ENCODE measurements at regions of chr2 and their contacts with region 1.

Region 1: GRCh38 chr2:61144697-61145268 is 17.2 kb upstream of the C2orf74 start:
- DNase-seq: peak; percentile 97
- ATAC-seq: peak; percentile 90
- H3K4me3 ChIP-seq: peak overlapping the region; percentile 78 to 95 (median 88)
- H3K4me3 Mint-ChIP-seq: peak overlapping the region; percentile 95
- H3K27ac ChIP-seq: peak overlapping the region; percentile 76 to 78
- H3K27ac Mint-ChIP-seq: peak overlapping the region; percentile 98
- H3K4me1 ChIP-seq: peaks cover 8 to 11% of the 10 kb centered on the region in 2 donors
- H3K4me1 Mint-ChIP-seq: peaks cover 13% of the 10 kb centered on the region
- H3K27me3 ChIP-seq: no peaks in the 10 kb centered on the region
- H3K27me3 Mint-ChIP-seq: no peaks in the 10 kb centered on the region
- CTCF ChIP-seq: no peak

Region 2: DNA sequence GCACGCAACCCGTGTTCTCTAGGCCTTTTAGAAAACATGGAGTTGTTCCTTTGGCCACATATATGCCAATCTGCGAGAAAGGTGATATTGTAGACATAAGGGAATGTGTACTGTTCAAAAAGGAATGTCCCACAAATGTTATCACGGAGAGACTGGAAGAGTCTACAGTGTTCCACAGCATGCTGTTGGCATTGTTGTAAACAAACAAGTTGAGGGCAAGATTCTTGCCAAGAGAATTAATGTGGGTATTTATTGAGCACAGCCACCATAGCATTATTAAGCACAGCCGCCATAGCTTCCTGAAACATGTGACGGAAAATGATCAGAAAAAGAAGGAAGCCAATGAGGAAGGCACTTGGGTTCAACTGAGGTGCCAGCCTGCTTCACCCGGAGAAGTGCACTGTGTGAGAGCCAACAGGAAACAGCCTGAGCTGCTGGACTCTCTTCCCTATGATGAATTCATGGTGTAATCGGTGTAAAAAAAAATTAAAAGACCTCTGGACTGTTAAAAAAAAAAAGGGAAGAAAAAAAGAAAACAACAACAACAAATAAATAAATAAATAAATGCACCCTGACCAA is 292.4 kb before region 1 on chr2:
- CTCF ChIA-PET with region 1: no interaction called
- POLR2A ChIA-PET with region 1: no interaction called
- intact Hi-C with region 1: no loop called
- DNase-seq: no peak
- ATAC-seq: no peak
- H3K4me3 ChIP-seq: no peak overlapping the region
- H3K4me3 Mint-ChIP-seq: no peak overlapping the region
- H3K27ac ChIP-seq: no peak overlapping the region
- H3K27ac Mint-ChIP-seq: no peak overlapping the region
- H3K4me1 ChIP-seq: peaks cover 15 to 16% of the 10 kb centered on the region in 2 donors
- H3K4me1 Mint-ChIP-seq: peaks cover 18% of the 10 kb centered on the region
- H3K27me3 ChIP-seq: no peaks in the 10 kb centered on the region
- H3K27me3 Mint-ChIP-seq: no peaks in the 10 kb centered on the region
- CTCF ChIP-seq: no peak

Region 3: DNA sequence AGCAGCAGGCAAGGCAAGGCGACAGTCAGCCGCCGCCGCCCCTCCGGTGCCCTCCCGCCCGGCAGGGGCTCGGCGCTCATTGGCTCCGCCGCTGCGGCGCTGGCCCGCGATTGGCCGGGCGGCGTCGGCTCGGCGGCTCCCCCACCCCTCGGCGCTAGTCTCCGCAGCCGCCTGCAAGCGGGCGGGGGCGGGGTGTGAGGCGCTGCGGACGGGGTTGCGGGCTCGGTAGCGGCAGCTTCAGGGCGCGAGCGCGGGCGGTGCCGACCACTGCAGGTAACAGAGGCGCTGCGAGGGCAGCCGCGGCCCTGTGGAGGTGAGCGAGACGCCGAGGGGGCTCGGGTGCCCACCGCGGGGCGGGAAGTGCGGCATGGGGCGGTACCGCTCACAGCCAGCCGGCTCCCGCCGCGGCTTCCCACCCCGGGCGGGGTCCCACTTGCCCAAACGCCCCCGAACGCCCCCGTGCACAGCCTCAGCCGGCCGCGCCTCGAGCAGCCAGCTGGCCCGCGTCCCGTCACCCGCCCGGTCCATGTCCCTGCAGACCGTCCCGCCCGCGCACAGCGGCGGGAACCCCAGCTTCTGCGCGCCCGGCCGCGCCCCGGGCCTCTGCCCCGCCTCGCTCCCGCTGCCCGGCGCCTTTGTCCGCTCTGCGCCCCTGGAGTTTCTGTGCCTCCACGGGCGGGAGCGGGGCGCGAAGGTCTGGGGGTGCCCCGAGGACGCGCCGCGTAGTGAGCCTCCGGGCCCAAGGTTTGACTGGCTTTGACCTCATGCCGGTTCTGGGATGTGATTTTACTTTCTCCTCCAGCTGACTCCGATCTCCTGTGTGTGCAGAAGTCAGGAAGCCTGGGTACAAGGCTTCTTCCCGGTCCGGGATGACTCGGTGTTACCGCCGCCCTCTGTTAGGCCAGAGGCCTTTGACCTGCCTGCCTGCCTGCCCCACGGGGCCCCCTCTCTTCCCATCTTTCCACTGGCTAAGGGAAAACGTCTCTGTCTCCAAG is 78.8 kb before region 1 on chr2 and contains the start of gene SANBR:
- CTCF ChIA-PET with region 1: no interaction called
- POLR2A ChIA-PET with region 1: interaction called, 3 read pairs
- intact Hi-C with region 1: loop called (anchors 2 kb)
- DNase-seq: peak; percentile 89
- ATAC-seq: peak; percentile 98
- H3K4me3 ChIP-seq: peak within 1 kb of the TSS; percentile 45 to 81 (median 70)
- H3K4me3 Mint-ChIP-seq: peak within 1 kb of the TSS; percentile 96
- H3K27ac ChIP-seq: peak within 1 kb of the TSS in 1 of 2 donors; percentile 24
- H3K27ac Mint-ChIP-seq: peak within 1 kb of the TSS; percentile 89
- H3K4me1 ChIP-seq: peaks cover 12 to 17% of the 10 kb centered on the region in 2 donors
- H3K4me1 Mint-ChIP-seq: peaks cover 13% of the 10 kb centered on the region
- H3K27me3 ChIP-seq: no peaks in the 10 kb centered on the region
- H3K27me3 Mint-ChIP-seq: no peaks in the 10 kb centered on the region
- CTCF ChIP-seq: no peak
- total RNA-seq, gene SANBR: 6.6 and 7.4 TPM in 2 replicates